CD4-positive, alpha-beta memory T cell (primary cell): ENCODE measurements at regions of chr3 and their contacts with region 1.

Region 1: GRCh38 chr3:128725932-128726690 is at the start of gene RAB7A:
- DNase-seq: peak; percentile 96 to 97 (median 96)
- H3K4me3 ChIP-seq: peak within 1 kb of the TSS; percentile 79 to 86
- H3K4me3 Mint-ChIP-seq: peak within 1 kb of the TSS; percentile 93 to 100 (median 97)
- H3K27ac ChIP-seq: peak within 1 kb of the TSS; percentile 98
- H3K27ac Mint-ChIP-seq: peak within 1 kb of the TSS; percentile 95 to 98 (median 97)
- H3K4me1 ChIP-seq: peaks cover 50% of the 10 kb centered on the region
- H3K4me1 Mint-ChIP-seq: peaks cover 40 to 59% (median 47%) of the 10 kb centered on the region in 4 donors
- H3K27me3 ChIP-seq: no peaks in the 10 kb centered on the region
- H3K27me3 Mint-ChIP-seq: peaks cover 0 to 2% of the 10 kb centered on the region in 2 donors
- total RNA-seq, gene RAB7A: 141 to 152 TPM

Region 2: DNA sequence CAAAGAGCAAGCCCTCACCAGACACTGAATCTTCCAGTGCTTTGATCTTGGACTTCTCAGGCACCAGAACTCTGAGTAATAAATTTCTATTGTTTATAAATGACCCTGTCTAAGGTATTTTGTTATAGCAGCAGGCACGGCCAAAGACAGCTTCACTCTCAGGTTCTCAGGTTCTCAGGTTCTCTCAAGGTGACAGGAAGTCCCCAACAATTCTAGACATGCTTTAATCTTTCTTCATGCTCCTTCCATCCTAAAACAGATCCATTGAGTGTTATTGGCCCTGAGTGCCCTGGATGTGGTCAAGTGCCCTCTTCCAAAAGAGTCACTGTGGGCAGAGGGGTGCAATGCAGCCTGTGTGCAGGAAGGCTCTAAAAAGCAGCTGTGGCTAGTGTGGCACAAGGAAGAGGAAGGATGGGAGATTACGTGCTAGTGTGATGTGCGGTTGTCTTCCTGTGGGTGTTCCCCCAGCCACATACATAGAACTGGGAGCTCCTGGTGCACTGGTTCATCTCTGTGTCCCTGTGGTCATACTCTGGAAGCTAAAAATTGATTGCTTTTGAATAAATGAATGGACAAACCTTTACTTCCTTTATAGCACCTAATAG is 11.1 kb before region 1 on chr3:
- CTCF ChIA-PET with region 1: interaction called, 7 read pairs
- POLR2A ChIA-PET with region 1: interaction called, 15 read pairs
- intact Hi-C with region 1: no loop called
- DNase-seq: peak; percentile 38 to 64 (median 47)
- H3K4me3 ChIP-seq: no peak overlapping the region
- H3K4me3 Mint-ChIP-seq: peak overlapping the region in 6 of 8 donors; percentile 41 to 80 (median 67)
- H3K27ac ChIP-seq: no peak overlapping the region
- H3K27ac Mint-ChIP-seq: peak overlapping the region; percentile 58 to 92 (median 91)
- H3K4me1 ChIP-seq: peaks cover 12% of the 10 kb centered on the region
- H3K4me1 Mint-ChIP-seq: peaks cover 9 to 18% (median 13%) of the 10 kb centered on the region in 4 donors
- H3K27me3 ChIP-seq: no peaks in the 10 kb centered on the region
- H3K27me3 Mint-ChIP-seq: no peaks in the 10 kb centered on the region

Region 3: GRCh38 chr3:128787256-128788240 is 61.4 kb after region 1 on chr3:
- CTCF ChIA-PET with region 1: interaction called, 4 read pairs
- POLR2A ChIA-PET with region 1: interaction called, 28 read pairs
- intact Hi-C with region 1: no loop called
- DNase-seq: peak; percentile 39 to 77 (median 43)
- H3K4me3 ChIP-seq: peak overlapping the region; percentile 0 to 57
- H3K4me3 Mint-ChIP-seq: peak overlapping the region; percentile 53 to 90 (median 84)
- H3K27ac ChIP-seq: peak overlapping the region; percentile 48
- H3K27ac Mint-ChIP-seq: peak overlapping the region; percentile 89 to 98 (median 94)
- H3K4me1 ChIP-seq: peaks cover 79% of the 10 kb centered on the region
- H3K4me1 Mint-ChIP-seq: peaks cover 56 to 87% (median 72%) of the 10 kb centered on the region in 4 donors
- H3K27me3 ChIP-seq: no peaks in the 10 kb centered on the region
- H3K27me3 Mint-ChIP-seq: no peaks in the 10 kb centered on the region

Region 4: DNA sequence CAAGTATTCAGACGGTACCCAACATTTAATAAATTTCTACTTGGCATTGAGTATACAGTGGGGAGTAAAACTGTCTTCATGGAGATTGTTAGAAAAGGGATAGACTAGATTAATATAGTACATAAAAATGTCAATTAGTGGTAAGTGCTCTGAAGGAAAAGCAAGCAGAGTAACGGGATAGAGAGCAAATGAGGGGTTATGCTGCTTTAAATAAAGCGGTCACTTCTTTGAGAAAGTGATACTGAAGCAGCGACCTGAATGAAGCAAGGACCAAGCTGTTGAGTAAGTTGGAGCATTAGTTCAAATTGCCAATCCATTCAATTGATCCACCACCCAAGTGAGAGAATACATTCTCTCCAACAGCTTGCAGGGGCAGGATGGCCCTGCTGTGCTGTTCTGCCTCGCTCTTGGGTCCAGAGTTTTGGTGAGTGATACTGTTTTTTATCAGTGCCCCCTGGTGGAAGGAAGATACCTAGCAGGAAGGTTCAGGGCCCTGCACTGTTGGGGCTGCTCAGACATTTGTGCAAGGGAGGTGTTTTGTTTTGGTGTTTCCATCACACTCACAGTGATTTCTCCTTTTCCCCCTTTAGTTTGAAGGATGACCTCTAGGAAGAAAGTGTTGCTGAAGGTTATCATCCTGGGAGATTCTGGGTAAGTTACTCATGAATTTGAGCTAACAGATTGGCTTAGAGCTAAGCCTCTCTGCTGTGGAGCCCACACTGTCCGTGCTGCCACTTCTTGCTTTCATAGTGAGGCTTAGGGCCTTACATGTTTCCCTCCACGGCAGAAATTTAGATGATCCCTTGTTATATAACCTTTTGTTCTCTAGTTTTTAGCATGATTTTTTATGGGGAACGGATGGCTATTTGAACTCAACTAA is 68.9 kb after region 1 on chr3:
- CTCF ChIA-PET with region 1: interaction called, 6 read pairs
- POLR2A ChIA-PET with region 1: interaction called, 28 read pairs
- intact Hi-C with region 1: loop called (anchors 2 kb)
- DNase-seq: peak; percentile 71 to 75 (median 74)
- H3K4me3 ChIP-seq: no peak overlapping the region
- H3K4me3 Mint-ChIP-seq: peak overlapping the region in 4 of 8 donors; percentile 7 to 47 (median 22)
- H3K27ac ChIP-seq: peak overlapping the region; percentile 18
- H3K27ac Mint-ChIP-seq: peak overlapping the region; percentile 73 to 91 (median 88)
- H3K4me1 ChIP-seq: peaks cover 58% of the 10 kb centered on the region
- H3K4me1 Mint-ChIP-seq: peaks cover 37 to 68% (median 55%) of the 10 kb centered on the region in 4 donors
- H3K27me3 ChIP-seq: no peaks in the 10 kb centered on the region
- H3K27me3 Mint-ChIP-seq: no peaks in the 10 kb centered on the region

Region 5: GRCh38 chr3:128879125-128879969 is 153.2 kb after region 1 on chr3 and contains the start of gene ACAD9:
- CTCF ChIA-PET with region 1: interaction called, 4 read pairs
- POLR2A ChIA-PET with region 1: interaction called, 3 read pairs
- intact Hi-C with region 1: loop called (anchors 2 kb)
- DNase-seq: peak; percentile 97
- H3K4me3 ChIP-seq: peak within 1 kb of the TSS; percentile 82 to 91
- H3K4me3 Mint-ChIP-seq: peak within 1 kb of the TSS; percentile 85 to 97 (median 94)
- H3K27ac ChIP-seq: peak within 1 kb of the TSS; percentile 92
- H3K27ac Mint-ChIP-seq: peak within 1 kb of the TSS; percentile 92 to 99 (median 99)
- H3K4me1 ChIP-seq: peaks cover 38% of the 10 kb centered on the region
- H3K4me1 Mint-ChIP-seq: peaks cover 47 to 79% (median 61%) of the 10 kb centered on the region in 4 donors
- H3K27me3 ChIP-seq: no peaks in the 10 kb centered on the region
- H3K27me3 Mint-ChIP-seq: no peaks in the 10 kb centered on the region
- total RNA-seq, gene ACAD9: 54.9 to 62.2 TPM

Region 6: DNA sequence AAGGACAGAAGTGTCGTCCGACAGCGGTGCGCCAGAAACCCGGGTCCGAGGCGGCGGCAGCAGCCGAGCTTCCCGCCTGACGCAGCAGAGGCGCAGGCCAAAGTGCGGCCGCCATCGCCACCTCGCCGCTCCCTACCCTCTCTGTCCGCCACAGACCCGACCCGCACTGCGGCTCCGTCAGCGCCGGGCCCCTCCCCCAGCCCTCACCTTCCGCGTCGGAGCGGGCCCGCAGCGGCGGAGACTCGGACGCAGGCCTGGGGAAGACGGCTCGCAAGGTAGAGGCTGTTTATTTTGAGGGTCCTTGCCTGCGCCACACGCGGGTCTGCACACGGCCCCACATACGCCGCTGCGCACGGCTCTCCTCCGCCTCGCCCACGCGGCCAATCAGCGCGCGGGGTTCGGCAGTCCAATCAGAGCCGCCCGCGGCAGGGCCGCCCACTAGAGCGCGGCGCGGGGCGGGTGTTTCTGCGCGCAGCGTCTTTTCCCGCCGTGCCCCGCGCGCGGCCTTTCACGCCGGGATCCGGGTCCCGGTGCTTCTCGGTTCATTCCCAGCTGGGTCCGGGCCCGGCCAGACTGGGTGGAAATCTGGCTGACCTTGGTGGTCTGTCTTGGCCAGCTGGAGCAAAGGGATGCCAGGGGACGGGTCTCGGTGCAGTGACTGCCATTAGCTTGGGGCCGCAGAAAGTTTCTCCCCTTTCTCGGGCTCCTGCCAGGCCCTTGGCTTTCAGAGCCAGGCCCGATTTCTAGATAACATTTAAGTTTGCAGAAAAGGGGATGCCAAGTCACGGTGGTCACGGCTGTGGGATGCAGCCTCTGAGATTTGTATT is 457.7 kb after region 1 on chr3 and contains the start of gene CNBP:
- CTCF ChIA-PET with region 1: no interaction called
- POLR2A ChIA-PET with region 1: no interaction called
- intact Hi-C with region 1: loop called (anchors 5 kb)
- DNase-seq: peak; percentile 90 to 95 (median 93)
- H3K4me3 ChIP-seq: peak within 1 kb of the TSS; percentile 51 to 93
- H3K4me3 Mint-ChIP-seq: peak within 1 kb of the TSS; percentile 89 to 99 (median 97)
- H3K27ac ChIP-seq: peak within 1 kb of the TSS; percentile 99
- H3K27ac Mint-ChIP-seq: peak within 1 kb of the TSS; percentile 91 to 99 (median 98)
- H3K4me1 ChIP-seq: peaks cover 41% of the 10 kb centered on the region
- H3K4me1 Mint-ChIP-seq: peaks cover 20 to 55% (median 31%) of the 10 kb centered on the region in 4 donors
- H3K27me3 ChIP-seq: no peaks in the 10 kb centered on the region
- H3K27me3 Mint-ChIP-seq: no peaks in the 10 kb centered on the region
- total RNA-seq, gene CNBP: 369 to 400 TPM

Region 7: DNA sequence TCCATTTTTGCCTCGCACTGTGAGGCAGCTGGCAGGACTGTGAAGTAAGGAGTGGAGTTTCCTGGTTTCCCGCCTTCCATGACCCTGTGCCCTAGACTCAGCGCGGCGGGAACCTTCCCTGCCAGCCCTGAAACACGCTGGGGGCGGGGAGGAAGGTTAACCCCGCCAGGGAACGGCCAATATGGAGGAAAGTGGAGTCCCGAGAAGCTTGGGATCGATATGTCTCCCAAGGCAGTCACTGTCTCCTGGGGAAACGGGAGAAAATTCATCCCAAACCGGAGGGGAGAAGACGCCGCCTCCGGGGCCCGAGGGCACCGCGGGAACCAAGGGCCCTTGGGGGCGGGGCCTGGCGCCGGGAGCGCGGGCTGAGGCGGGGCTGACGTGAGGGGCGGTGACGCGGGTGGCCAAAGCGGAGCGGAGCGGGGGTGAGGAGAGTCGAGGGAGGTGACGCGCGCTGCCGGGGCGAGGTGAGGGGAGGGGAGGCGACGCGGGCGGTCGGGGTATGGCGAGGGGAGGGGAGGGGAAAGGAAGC is 552.4 kb after region 1 on chr3 and contains the start of gene HMCES:
- CTCF ChIA-PET with region 1: no interaction called
- POLR2A ChIA-PET with region 1: no interaction called
- intact Hi-C with region 1: loop called (anchors 5 kb)
- DNase-seq: peak; percentile 93 to 97 (median 95)
- H3K4me3 ChIP-seq: peak within 1 kb of the TSS; percentile 69 to 85
- H3K4me3 Mint-ChIP-seq: peak within 1 kb of the TSS; percentile 94 to 99 (median 98)
- H3K27ac ChIP-seq: peak within 1 kb of the TSS; percentile 99
- H3K27ac Mint-ChIP-seq: peak within 1 kb of the TSS; percentile 90 to 100 (median 99)
- H3K4me1 ChIP-seq: peaks cover 44% of the 10 kb centered on the region
- H3K4me1 Mint-ChIP-seq: peaks cover 22 to 50% (median 38%) of the 10 kb centered on the region in 4 donors
- H3K27me3 ChIP-seq: no peaks in the 10 kb centered on the region
- H3K27me3 Mint-ChIP-seq: no peaks in the 10 kb centered on the region
- total RNA-seq, gene HMCES: 50.1 to 52.5 TPM